ENCODE measurements at regions of chr16 and their contacts with region 1.

Region 1: DNA sequence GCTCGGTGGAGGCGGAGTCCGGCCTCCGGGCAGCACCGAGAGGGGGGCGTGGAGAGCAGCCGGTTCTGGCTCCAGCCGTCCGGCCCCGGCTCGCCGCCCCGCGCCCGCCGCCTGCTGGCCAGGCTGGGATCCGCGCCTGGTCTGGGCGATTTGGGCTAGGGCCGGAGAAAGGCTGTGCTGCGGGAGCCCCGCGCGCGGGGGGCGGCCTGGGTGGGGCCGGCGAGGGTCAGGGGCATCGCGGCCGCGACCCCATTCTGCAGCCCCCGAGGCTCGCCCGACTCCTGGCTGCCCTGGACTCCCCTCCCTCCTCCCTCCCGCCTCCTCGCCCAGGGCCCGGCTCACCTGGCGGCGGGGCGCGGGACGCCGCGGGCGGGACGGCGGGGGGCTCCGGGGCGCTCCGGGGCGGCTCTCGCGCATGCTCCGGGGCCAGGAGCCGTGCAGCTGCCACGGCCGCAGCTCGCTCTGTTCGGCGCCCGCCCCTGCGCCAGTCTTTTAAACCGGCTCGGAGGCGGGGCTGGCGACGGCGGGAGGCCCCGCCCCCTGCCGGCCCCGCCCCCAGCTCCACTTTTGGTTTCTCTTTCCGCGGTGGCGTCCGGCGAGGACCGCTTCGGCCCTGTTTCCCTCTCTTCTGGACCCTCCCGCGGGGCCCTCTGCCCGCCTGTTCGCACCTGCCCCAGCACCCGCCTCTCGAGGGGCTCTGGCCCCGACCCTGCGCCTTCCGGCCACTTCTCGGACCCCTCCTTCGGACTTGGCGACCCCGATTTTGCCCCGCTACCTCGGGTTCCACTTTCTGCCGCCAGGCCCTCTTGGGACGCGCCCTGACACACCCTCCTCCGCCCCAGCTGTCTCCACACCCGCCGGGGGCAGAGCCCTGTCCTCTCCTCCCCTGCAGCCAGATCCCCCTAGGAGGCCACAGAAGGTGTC is at the start of gene SOCS1:
- DNase-seq: peak; percentile 80 to 90 (median 85)
- H3K4me3 ChIP-seq: peak within 1 kb of the TSS; percentile 83
- H3K4me3 Mint-ChIP-seq: peak within 1 kb of the TSS; percentile 95 to 100 (median 97)
- H3K27ac ChIP-seq: peak within 1 kb of the TSS; percentile 80
- H3K27ac Mint-ChIP-seq: peak within 1 kb of the TSS; percentile 92 to 100 (median 96)
- H3K4me1 ChIP-seq: peaks cover 60% of the 10 kb centered on the region
- H3K4me1 Mint-ChIP-seq: peaks cover 50 to 70% (median 51%) of the 10 kb centered on the region in 3 donors
- H3K27me3 ChIP-seq: no peaks in the 10 kb centered on the region
- H3K27me3 Mint-ChIP-seq: peaks cover 0 to 7% of the 10 kb centered on the region in 2 donors
- total RNA-seq, gene SOCS1: 128 to 144 TPM

Region 2: DNA sequence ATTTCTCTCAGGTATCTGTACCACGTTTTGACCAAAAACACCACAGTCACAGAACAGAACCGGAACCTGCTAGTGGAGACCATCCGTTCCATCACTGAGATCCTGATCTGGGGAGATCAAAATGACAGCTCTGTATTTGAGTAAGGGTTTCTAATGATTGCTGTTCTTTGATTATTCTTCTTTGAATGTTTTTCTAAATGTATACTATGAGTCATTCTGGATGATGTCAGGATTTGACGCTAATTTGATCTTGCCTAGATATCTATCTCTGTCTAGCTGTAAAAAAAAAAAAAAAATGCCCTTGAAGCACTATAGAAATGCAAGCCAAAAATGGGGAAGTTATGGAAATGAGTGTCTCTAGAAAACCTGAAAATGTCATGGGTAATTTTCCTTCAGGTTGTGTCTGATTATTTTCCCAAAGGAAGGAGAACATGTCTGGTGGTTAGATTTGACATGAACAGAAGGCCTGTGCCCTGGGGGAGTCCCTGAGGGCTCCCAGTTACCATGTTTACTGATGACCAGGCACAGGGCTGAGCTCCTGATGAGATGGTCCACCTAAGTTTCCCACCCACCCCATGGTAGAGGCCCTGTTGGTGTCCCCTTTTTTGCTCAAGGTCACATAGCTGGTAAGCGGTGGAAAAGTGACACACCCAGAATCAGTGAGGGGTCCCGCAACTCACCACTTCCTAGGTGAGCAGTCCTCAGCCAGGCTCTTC is 298.1 kb before region 1 on chr16:
- CTCF ChIA-PET with region 1: interaction called, 46 read pairs
- POLR2A ChIA-PET with region 1: interaction called, 18 read pairs
- DNase-seq: no peak
- H3K4me3 ChIP-seq: no peak overlapping the region
- H3K4me3 Mint-ChIP-seq: peak overlapping the region in 1 of 7 donors; percentile 41
- H3K27ac ChIP-seq: no peak overlapping the region
- H3K27ac Mint-ChIP-seq: peak overlapping the region in 7 of 8 donors; percentile 1 to 69 (median 56)
- H3K4me1 ChIP-seq: peaks cover 9% of the 10 kb centered on the region
- H3K4me1 Mint-ChIP-seq: peaks cover 14 to 35% (median 33%) of the 10 kb centered on the region in 3 donors
- H3K27me3 ChIP-seq: no peaks in the 10 kb centered on the region
- H3K27me3 Mint-ChIP-seq: no peaks in the 10 kb centered on the region

Region 3: DNA sequence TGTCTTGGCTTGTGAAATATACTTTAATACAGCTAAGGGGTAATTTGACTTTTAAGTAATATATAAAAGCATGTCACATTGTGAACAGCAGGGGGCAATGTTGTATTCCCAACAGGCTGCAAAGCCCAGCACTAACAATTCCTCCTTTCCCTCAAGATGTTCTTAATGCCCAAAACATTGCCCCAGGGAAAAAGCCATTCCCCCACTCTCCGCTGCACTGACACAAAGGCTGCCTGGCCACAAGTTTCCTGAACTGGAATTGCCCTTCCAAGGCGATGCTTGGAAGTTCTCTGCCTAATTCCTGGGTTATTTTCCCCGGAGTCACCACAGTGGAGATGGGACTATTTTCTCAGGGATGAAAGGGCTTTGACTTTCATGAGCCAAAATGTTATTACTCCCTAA is 284.4 kb before region 1 on chr16:
- CTCF ChIA-PET with region 1: interaction called, 32 read pairs
- POLR2A ChIA-PET with region 1: interaction called, 3 read pairs
- DNase-seq: peak in 2 of 5 donors; percentile 35 to 36
- H3K4me3 ChIP-seq: no peak overlapping the region
- H3K4me3 Mint-ChIP-seq: no peak overlapping the region
- H3K27ac ChIP-seq: peak overlapping the region; percentile 27
- H3K27ac Mint-ChIP-seq: no peak overlapping the region
- H3K4me1 ChIP-seq: peaks cover 4% of the 10 kb centered on the region
- H3K4me1 Mint-ChIP-seq: peaks cover 5 to 14% (median 12%) of the 10 kb centered on the region in 3 donors
- H3K27me3 ChIP-seq: no peaks in the 10 kb centered on the region
- H3K27me3 Mint-ChIP-seq: no peaks in the 10 kb centered on the region

Region 4: GRCh38 chr16:11232852-11233726 is 22.9 kb before region 1 on chr16:
- CTCF ChIA-PET with region 1: interaction called, 23 read pairs
- POLR2A ChIA-PET with region 1: interaction called, 38 read pairs
- DNase-seq: peak; percentile 66 to 92 (median 84)
- H3K4me3 ChIP-seq: peak overlapping the region; percentile 51
- H3K4me3 Mint-ChIP-seq: peak overlapping the region; percentile 65 to 84 (median 73)
- H3K27ac ChIP-seq: peak overlapping the region; percentile 90
- H3K27ac Mint-ChIP-seq: peak overlapping the region; percentile 92 to 99 (median 96)
- H3K4me1 ChIP-seq: peaks cover 60% of the 10 kb centered on the region
- H3K4me1 Mint-ChIP-seq: peaks cover 47 to 67% (median 66%) of the 10 kb centered on the region in 3 donors
- H3K27me3 ChIP-seq: no peaks in the 10 kb centered on the region
- H3K27me3 Mint-ChIP-seq: peaks cover 0 to 2% of the 10 kb centered on the region in 2 donors

Region 5: DNA sequence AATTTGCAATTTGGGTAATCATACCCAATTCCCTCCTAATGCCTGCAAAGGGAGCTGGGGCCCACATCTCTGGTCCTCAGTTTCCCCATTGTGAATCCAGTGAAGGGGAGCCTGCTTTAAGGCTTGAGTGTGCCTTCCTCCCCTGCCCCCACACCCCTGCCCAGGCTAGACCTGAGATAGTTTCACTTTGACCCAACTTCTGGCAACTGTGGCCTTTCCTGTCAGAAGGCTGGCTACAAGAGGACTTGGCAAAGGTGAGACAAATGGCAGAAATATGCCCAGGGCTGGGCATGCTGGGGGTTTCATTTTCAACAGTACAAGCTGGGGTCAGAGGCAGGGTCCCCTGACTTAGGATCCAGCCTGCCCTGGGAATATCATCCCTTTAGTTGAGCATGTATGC is 10.0 kb before region 1 on chr16:
- CTCF ChIA-PET with region 1: interaction called, 16 read pairs
- POLR2A ChIA-PET with region 1: interaction called, 10 read pairs
- DNase-seq: no peak
- H3K4me3 ChIP-seq: no peak overlapping the region
- H3K4me3 Mint-ChIP-seq: no peak overlapping the region
- H3K27ac ChIP-seq: no peak overlapping the region
- H3K27ac Mint-ChIP-seq: peak overlapping the region in 1 of 8 donors; percentile 50
- H3K4me1 ChIP-seq: peaks cover 3% of the 10 kb centered on the region
- H3K4me1 Mint-ChIP-seq: peaks cover 6 to 11% (median 10%) of the 10 kb centered on the region in 3 donors
- H3K27me3 ChIP-seq: no peaks in the 10 kb centered on the region
- H3K27me3 Mint-ChIP-seq: peaks cover 0 to 1% of the 10 kb centered on the region in 2 donors

Region 6: DNA sequence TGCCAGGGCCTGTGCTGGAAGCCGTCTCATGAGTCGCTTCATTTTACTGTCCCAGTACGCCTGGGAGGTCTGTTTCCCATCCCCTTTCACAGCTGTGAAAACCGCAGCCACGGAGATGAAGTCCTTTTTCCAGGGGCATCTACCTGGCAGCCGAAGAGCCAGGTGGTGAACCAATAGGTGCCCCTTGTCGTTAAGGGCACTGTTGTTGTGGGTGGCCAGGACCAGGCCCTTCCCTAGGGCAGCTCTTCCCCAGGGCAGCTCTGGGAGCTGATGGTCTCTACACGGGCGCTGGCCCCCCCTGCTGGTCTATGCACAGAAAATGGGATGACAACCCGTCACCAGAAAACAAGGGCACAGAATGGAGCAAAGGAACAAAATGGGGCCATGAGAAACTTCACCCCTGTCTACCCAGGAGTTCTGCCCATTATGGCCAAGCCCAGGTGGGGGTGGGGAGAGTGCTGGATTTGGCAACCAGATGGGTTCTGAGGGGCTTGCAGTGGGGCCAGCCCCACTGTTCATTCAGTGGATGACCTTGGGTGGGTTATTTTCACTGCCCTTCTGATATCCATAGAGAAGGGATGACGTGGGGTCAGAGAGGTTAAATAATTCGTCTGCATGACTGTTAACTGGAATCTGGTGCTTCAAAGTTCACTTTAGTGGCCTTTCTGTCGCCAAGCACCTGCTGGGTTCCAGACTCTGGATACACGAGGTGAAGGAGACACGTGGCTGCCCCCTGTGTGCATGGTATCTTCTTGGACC is 100.8 kb after region 1 on chr16:
- CTCF ChIA-PET with region 1: interaction called, 13 read pairs
- POLR2A ChIA-PET with region 1: interaction called, 7 read pairs
- DNase-seq: peak; percentile 25 to 65 (median 38)
- H3K4me3 ChIP-seq: no peak overlapping the region
- H3K4me3 Mint-ChIP-seq: no peak overlapping the region
- H3K27ac ChIP-seq: no peak overlapping the region
- H3K27ac Mint-ChIP-seq: peak overlapping the region in 1 of 8 donors; percentile 24
- H3K4me1 ChIP-seq: peaks cover 54% of the 10 kb centered on the region
- H3K4me1 Mint-ChIP-seq: peaks cover 46 to 51% (median 50%) of the 10 kb centered on the region in 3 donors
- H3K27me3 ChIP-seq: peaks cover 9% of the 10 kb centered on the region
- H3K27me3 Mint-ChIP-seq: peaks cover 32 to 50% of the 10 kb centered on the region in 2 donors

Region 7: DNA sequence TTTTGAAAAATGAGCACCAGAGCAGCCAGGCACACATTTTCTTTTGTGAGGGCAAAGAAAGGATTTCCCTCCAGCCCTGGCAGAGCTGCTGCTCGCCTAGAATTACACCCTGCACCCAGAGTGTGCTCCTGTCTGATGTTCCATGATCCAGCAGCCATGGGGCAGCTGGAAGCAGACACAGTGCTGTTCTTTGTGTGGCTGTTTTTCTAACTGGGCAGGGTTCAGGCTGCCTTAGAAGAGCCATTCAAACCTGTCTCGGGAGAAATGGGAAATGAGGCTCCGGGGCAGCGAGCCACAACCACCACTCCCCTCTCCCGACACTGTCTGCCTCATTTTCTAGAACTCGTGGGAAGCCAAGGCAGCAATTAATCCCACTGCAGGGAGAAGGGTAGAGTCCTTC is 301.8 kb after region 1 on chr16:
- CTCF ChIA-PET with region 1: no interaction called
- POLR2A ChIA-PET with region 1: no interaction called
- DNase-seq: no peak
- H3K4me3 ChIP-seq: no peak overlapping the region
- H3K4me3 Mint-ChIP-seq: peak overlapping the region; percentile 62 to 89 (median 75)
- H3K27ac ChIP-seq: peak overlapping the region; percentile 25
- H3K27ac Mint-ChIP-seq: peak overlapping the region; percentile 77 to 100 (median 98)
- H3K4me1 ChIP-seq: peaks cover 77% of the 10 kb centered on the region
- H3K4me1 Mint-ChIP-seq: peaks cover 68 to 89% (median 74%) of the 10 kb centered on the region in 3 donors
- H3K27me3 ChIP-seq: no peaks in the 10 kb centered on the region
- H3K27me3 Mint-ChIP-seq: peaks cover 0 to 8% of the 10 kb centered on the region in 2 donors

Measured in CD8-positive, alpha-beta memory T cell (primary cell).